ENCODE measurements at regions of chr1 and their contacts with region 1.

Region 1: GRCh38 chr1:169546087-169546995 is 39.9 kb downstream of the F5 start:
- DNase-seq: peak; percentile 65
- ATAC-seq: peak; percentile 89
- H3K4me3 ChIP-seq: no peak overlapping the region
- H3K27ac ChIP-seq: no peak overlapping the region
- H3K4me1 ChIP-seq: no peaks in the 10 kb centered on the region
- H3K27me3 ChIP-seq: no peaks in the 10 kb centered on the region
- CTCF ChIP-seq: peak; percentile 77 to 84 (median 82)
- POLR2A ChIP-seq: no peak
- RAD21 ChIP-seq: peak; percentile 92

Region 2: DNA sequence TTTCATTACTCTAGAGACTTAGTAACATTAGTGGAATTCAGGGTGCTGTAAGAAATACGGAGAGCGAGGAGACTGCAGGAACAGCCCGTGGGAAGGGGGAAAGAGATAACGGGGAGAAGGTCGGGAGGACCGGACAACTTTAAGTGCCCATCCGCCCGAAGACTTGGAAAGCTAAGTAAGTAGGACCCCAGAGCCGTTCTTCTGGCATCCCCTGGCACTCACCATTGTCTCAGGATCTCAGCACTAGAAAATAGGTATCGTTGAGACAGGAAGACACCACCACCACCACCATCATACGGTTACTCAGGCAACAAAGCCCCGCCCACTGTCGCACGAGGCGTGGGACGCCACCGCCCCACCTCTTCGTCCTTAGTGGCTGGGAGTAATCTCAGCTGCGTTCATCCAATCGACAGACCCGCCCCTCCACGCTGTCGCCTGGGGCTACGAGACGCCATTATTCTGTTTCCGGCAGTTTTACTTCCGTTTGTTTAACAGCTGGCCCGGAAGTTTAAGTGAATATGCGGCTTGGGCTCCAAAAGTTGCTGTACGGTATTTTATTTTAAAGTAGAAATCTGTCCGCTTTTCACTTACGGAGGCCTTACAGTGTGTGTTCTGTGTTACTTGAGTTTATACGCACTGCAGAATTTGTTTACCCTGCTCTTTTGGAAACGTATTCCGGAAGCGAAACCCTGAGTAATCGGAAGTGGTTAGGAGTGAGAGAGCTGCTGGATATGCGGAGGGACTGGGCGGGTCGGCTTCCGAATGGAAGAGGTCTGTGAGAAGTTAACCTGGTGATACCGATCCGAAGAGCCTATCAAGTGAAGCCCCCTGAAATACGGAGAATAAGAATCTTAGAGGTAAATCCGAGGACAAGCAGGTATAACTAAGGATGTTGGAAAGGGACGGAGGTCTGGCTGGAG is 178.6 kb before region 1 on chr1 and contains the starts of genes BLZF1 and NME7:
- CTCF ChIA-PET with region 1: no interaction called
- POLR2A ChIA-PET with region 1: no interaction called
- RAD21 ChIA-PET with region 1: no interaction called
- intact Hi-C with region 1: loop called (anchors 10 kb)
- DNase-seq: peak; percentile 94
- ATAC-seq: peak; percentile 97
- H3K4me3 ChIP-seq: peak within 1 kb of the TSS; percentile 91 to 97
- H3K27ac ChIP-seq: peak within 1 kb of the TSS; percentile 70
- H3K4me1 ChIP-seq: peaks cover 16 to 36% of the 10 kb centered on the region in 2 experiments
- H3K27me3 ChIP-seq: no peaks in the 10 kb centered on the region
- CTCF ChIP-seq: no peak
- POLR2A ChIP-seq: no peak
- RAD21 ChIP-seq: no peak
- total RNA-seq, gene BLZF1: 19.6 TPM
- total RNA-seq, gene NME7: 21.8 TPM

Region 3: GRCh38 chr1:169466259-169467230 is 79.8 kb before region 1 on chr1:
- CTCF ChIA-PET with region 1: interaction called, 13 read pairs
- POLR2A ChIA-PET with region 1: no interaction called
- RAD21 ChIA-PET with region 1: interaction called in 1 of 2 experiments, 6 read pairs
- intact Hi-C with region 1: loop called (anchors 1 kb)
- DNase-seq: peak; percentile 27
- ATAC-seq: peak; percentile 70
- H3K4me3 ChIP-seq: no peak overlapping the region
- H3K27ac ChIP-seq: no peak overlapping the region
- H3K4me1 ChIP-seq: no peaks in the 10 kb centered on the region
- H3K27me3 ChIP-seq: no peaks in the 10 kb centered on the region
- CTCF ChIP-seq: peak; percentile 8 to 51 (median 51); a peak in 4 of 6 replicates
- POLR2A ChIP-seq: no peak
- RAD21 ChIP-seq: peak; percentile 67